Posterior vena cava (tissue), 2 donors: ENCODE measurements at regions of chr11 and their contacts with region 1.

Region 1: DNA sequence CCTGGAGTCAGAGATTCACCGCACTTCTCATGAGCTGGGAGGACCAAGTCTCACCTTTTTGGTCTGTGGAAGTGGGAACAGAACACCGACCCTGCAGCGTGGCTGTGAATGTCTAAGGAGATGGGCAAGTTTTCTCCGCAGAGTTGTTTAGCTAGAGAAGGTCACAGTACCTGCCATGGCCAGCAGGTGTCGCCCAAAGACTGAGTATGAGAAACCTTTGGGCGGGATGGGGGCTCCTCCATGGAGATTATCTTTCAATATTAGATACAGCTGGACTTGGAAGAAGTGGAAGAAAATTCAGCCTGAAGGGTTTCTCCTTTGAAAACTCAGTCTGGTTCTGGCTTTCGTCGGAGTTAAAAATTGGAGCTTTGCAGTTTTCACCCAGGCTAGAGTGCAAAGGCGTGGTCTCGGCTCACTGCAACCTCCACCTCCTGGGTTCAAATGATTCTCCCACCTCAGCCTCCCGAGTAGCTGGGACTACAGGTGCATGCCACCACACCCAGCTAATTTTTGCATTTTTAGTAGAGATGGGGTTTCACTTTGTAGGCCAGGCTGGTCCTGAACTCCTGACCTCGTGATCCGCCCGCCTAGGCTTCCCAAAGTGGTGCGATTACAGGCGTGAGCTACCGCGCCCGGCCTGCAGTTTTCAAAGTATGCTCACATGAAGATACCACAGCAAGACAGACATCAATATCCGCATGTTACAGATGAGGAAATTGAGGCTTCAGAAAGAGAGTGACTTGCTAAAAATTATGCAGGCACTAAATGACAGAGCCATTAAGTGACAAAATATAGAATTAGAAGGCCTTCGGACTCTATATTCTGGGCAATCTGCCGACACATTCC is 10.7 kb upstream of the DSCAML1 start:
- DNase-seq: peak; percentile 95

Region 2: DNA sequence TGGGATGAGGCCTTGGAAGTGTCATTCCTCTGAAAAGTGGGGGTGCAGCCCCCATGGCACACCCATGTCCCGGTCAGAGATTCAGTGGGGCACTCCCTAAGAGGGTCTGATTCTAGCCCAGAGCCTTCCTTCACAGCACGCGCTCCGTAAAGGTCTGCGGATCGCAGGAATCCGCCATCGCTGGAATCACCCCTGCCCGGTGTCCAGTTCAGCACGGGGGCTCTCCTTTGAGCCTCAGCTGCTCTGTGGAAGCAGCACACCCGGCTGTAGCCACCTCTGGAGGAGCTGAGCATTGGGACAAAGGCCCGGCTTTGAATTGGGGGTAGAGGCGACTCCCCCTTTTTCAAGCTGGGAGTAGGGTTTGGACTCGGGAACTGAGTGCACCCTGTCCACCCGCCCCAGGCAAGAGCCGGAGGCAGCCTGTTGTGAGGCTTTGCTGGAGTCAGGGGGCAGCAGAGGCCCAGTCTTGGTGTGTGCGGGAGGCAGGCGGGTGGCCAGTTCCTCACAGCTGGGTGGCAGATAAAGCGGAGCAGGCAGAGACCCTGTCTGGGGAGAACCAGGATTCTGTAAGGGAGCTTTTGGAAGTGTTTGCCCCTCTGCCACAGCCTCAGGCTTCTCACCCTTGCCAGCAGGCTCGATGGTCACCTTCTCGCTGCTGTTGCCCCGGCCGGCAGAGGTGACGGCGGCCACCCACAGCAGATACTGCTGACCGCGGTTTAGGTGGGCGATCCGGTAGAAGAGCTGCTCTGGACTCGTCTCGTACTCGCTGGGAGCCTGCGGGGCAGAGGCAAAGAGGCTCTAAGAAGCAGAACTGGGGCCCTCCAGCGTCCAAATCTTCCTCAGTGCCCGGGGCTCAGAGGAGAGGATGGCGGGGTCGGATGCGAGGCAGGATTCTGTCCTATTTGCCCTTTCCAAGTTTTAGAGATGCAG is 364.2 kb before region 1 on chr11:
- intact Hi-C with region 1: loop called in 1 of 2 experiments (anchors 10 kb)
- DNase-seq: peak; percentile 89